ENCODE measurements at regions of chr11 and their contacts with region 1.

Region 1: DNA sequence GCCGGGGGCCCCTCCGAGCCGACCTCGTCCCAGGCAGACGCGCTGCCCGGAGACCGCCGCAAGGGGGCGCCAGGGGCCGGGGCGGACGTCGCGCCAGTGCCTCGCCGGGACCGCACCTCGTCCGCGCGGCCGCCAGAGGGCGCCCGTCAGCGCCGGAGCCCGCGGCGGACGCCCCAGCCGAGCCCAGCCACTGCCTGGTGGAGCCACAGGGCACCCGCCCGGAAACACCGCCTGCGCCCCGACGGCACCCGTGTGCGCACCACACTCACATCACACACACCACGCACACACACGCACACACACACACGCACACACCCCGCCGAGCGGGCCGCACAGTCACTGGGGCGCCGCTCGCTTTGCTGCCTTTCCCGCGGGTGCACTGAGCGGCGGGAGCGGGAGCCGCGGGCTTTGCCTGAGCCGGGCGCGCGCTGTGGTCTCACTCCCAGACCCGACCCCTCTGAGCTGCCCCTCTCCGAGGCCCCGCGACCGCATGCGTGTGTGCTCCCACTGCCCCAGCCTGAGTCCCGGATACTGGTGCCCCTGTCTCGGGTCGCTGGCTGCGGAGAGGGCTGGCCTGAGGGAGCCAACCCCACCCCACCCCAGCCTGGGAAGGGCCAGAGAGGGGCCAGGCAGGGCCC is 449.3 kb downstream of the OPCML start:
- DNase-seq: peak; percentile 66
- H3K4me3 Mint-ChIP-seq: no peak overlapping the region
- H3K27ac Mint-ChIP-seq: no peak overlapping the region
- H3K4me1 Mint-ChIP-seq: no peaks in the 10 kb centered on the region
- H3K27me3 Mint-ChIP-seq: peaks cover 29% of the 10 kb centered on the region

Region 2: GRCh38 chr11:133163463-133164419 is 80.8 kb after region 1 on chr11:
- intact Hi-C with region 1: loop called (anchors 2 kb)
- DNase-seq: no peak
- H3K4me3 Mint-ChIP-seq: no peak overlapping the region
- H3K27ac Mint-ChIP-seq: no peak overlapping the region
- H3K4me1 Mint-ChIP-seq: peaks cover 5% of the 10 kb centered on the region
- H3K27me3 Mint-ChIP-seq: peaks cover 9% of the 10 kb centered on the region

Region 3: GRCh38 chr11:133834682-133835592 is 752.0 kb after region 1 on chr11:
- intact Hi-C with region 1: loop called (anchors 1 kb)
- DNase-seq: peak; percentile 48
- H3K4me3 Mint-ChIP-seq: no peak overlapping the region
- H3K27ac Mint-ChIP-seq: no peak overlapping the region
- H3K4me1 Mint-ChIP-seq: peaks cover 5% of the 10 kb centered on the region
- H3K27me3 Mint-ChIP-seq: peaks cover 4% of the 10 kb centered on the region